Testis (tissue), 5 donors: ENCODE measurements at regions of chr2 and their contacts with region 1.

Region 1: DNA sequence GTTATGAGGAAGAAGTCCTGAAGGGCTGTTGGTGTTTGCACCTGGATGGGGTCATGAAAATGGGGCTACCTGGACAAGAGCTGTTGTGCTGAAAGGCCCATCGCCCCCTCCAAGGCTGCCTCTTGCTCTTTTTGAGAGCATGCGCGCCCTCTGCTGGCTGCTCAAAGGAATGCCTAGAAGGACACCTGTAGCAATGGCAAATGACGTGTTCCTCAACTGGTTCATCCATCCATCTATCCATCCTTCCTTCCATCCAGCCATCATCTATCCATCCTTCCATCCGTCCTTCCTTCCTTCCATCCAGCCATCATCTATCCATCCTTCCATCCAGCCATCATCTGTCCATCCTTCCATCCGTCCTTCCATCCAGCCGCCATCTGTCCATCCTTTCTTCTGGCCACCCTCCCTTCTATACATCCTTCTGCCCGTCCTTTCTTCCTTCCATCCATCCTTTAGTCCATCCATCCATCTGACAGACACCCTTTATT is 17.2 kb upstream of the RPL31 start:
- DNase-seq: peak; percentile 89
- H3K4me3 ChIP-seq: no peak overlapping the region
- H3K27ac ChIP-seq: no peak overlapping the region
- H3K4me1 ChIP-seq: peaks cover 6% of the 10 kb centered on the region
- H3K27me3 ChIP-seq: no peaks in the 10 kb centered on the region
- CTCF ChIP-seq: peak; percentile 67 to 88 (median 85)
- POLR2A ChIP-seq: no peak

Region 2: GRCh38 chr2:100606726-100607343 is 378.1 kb before region 1 on chr2:
- intact Hi-C with region 1: loop called (anchors 5 kb)
- DNase-seq: peak; percentile 40
- H3K4me3 ChIP-seq: peak overlapping the region in 1 of 2 donors; percentile 8
- H3K27ac ChIP-seq: no peak overlapping the region
- H3K4me1 ChIP-seq: no peaks in the 10 kb centered on the region
- H3K27me3 ChIP-seq: no peaks in the 10 kb centered on the region
- CTCF ChIP-seq: peak; percentile 40 to 83 (median 77)
- POLR2A ChIP-seq: no peak

Region 3: GRCh38 chr2:100730346-100730745 is 254.6 kb before region 1 on chr2:
- intact Hi-C with region 1: loop called (anchors 10 kb)
- DNase-seq: peak; percentile 61
- H3K4me3 ChIP-seq: no peak overlapping the region
- H3K27ac ChIP-seq: no peak overlapping the region
- H3K4me1 ChIP-seq: peaks cover 3% of the 10 kb centered on the region
- H3K27me3 ChIP-seq: no peaks in the 10 kb centered on the region
- CTCF ChIP-seq: peak in 2 of 3 experiments; percentile 30 to 40
- POLR2A ChIP-seq: no peak

Region 4: GRCh38 chr2:101080211-101081068 is 95.5 kb after region 1 on chr2:
- intact Hi-C with region 1: no loop called
- DNase-seq: peak; percentile 91
- H3K4me3 ChIP-seq: no peak overlapping the region
- H3K27ac ChIP-seq: peak overlapping the region; percentile 81 to 86
- H3K4me1 ChIP-seq: peaks cover 13% of the 10 kb centered on the region
- H3K27me3 ChIP-seq: no peaks in the 10 kb centered on the region
- CTCF ChIP-seq: no peak
- POLR2A ChIP-seq: no peak